Panc1 (cell line): ENCODE measurements at regions of chr11 and their contacts with region 1.

Region 1: GRCh38 chr11:17855531-17856290 is 121.1 kb downstream of the KCNC1 start:
- DNase-seq: no peak
- ATAC-seq: no peak
- H3K4me3 ChIP-seq: no peak overlapping the region
- H3K27ac ChIP-seq: no peak overlapping the region
- H3K4me1 ChIP-seq: no peaks in the 10 kb centered on the region
- H3K27me3 ChIP-seq: no peaks in the 10 kb centered on the region
- CTCF ChIP-seq: no peak

Region 2: GRCh38 chr11:17810746-17811145 is 45.0 kb before region 1 on chr11:
- CTCF ChIA-PET with region 1: no interaction called
- POLR2A ChIA-PET with region 1: no interaction called
- in situ Hi-C with region 1: no loop called
- intact Hi-C with region 1: no loop called
- DNase-seq: no peak
- ATAC-seq: no peak
- H3K4me3 ChIP-seq: no peak overlapping the region
- H3K27ac ChIP-seq: no peak overlapping the region; the same call in 1 of the 2 replicates
- H3K4me1 ChIP-seq: peaks cover 19% of the 10 kb centered on the region
- H3K27me3 ChIP-seq: no peaks in the 10 kb centered on the region
- CTCF ChIP-seq: no peak

Region 3: GRCh38 chr11:17883946-17884345 is 28.2 kb after region 1 on chr11:
- CTCF ChIA-PET with region 1: no interaction called
- POLR2A ChIA-PET with region 1: interaction called, 14 read pairs
- in situ Hi-C with region 1: no loop called
- intact Hi-C with region 1: no loop called
- DNase-seq: no peak
- ATAC-seq: no peak
- H3K4me3 ChIP-seq: no peak overlapping the region
- H3K27ac ChIP-seq: no peak overlapping the region
- H3K4me1 ChIP-seq: no peaks in the 10 kb centered on the region
- H3K27me3 ChIP-seq: no peaks in the 10 kb centered on the region
- CTCF ChIP-seq: no peak

Region 4: DNA sequence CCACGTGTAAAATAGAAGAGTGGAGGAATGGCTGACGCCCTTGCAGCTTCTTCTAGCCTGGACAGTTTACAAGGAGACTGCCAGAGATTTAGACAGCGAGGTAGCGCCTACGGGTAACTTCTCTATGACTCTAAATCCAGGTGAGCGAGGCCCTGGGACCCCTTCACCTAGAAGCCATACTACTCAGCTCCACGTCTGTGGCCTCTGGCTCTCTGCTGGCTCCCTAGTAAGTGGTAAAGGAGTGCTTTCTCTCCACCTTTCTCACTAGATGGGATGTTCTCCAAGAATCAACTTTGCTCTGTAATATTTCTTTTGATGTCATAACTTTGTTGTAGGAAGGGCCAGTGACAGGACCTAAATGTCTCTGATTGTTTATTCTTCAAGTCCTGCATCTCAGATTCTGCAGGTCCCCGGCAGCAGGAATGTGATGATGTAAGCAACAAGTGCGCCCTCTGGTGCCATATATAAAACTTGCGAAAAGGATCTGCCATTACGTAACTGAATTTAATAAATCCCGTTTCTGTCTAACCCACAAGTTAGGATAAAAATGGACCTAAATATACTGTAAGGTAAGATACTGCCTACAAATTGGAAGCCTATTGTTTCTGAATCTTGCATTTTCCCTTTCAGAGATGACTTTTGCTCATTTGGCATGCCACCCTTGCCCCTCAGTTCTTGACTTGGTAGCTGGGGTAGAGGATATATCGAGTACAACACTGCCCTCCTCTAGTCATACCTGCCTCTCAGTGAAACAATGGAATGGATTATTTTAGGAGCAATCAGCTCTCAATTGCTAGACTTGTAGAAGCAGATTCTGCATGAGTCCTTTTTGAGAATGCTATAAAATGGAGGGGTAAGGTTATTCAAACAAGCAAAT is 946.9 kb after region 1 on chr11:
- CTCF ChIA-PET with region 1: no interaction called
- POLR2A ChIA-PET with region 1: no interaction called
- in situ Hi-C with region 1: no loop called
- intact Hi-C with region 1: no loop called
- DNase-seq: peak; percentile 20
- ATAC-seq: peak; percentile 84
- H3K4me3 ChIP-seq: no peak overlapping the region
- H3K27ac ChIP-seq: no peak overlapping the region
- H3K4me1 ChIP-seq: no peaks in the 10 kb centered on the region
- H3K27me3 ChIP-seq: peaks cover 11% of the 10 kb centered on the region
- CTCF ChIP-seq: peak; percentile 80